Psoas muscle (tissue), 8 donors: ENCODE measurements at regions of chr12 and their contacts with region 1.

Region 1: GRCh38 chr12:2682296-2683251 is 112.2 kb upstream of the FKBP4 start:
- DNase-seq: no peak
- ATAC-seq: peak; percentile 50 to 78 (median 72)
- H3K4me3 ChIP-seq: no peak overlapping the region
- H3K27ac ChIP-seq: no peak overlapping the region
- H3K4me1 ChIP-seq: no peaks in the 10 kb centered on the region
- H3K27me3 ChIP-seq: no peaks in the 10 kb centered on the region
- CTCF ChIP-seq: peak; percentile 47

Region 2: DNA sequence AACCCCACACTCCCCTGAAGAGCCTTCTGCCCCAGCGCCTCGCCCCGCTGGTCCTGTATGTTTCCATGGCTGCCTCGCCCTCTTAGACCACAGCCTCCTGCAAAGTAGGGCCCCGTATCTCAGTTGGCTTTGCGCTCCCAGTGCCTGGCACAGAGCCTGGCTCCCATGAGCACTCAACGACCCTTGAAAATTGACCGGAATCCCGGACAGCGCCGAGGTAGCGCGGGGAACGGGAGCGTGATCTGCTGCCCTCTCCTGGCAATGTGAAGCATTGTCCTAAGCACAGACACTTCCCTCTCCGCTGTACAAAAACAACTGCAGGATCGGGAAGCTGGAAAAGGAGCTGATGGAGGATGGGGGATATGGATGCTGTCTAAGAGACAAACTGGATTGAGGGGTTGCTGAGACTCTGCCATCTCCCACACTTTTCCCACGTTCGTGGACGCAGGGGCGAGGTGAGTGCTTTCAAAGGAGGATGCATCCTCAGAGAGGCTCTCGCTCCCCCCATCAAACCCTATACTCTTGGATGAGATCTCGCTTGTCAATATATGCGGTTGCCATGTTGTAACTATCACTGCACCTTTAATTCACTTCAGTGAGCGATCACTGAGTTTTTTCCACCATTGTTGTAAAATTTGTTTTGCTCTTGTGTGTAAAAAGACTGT is 101.5 kb after region 1 on chr12:
- intact Hi-C with region 1: loop called in 1 of 2 experiments (anchors 5 kb)
- DNase-seq: peak; percentile 56 to 76
- ATAC-seq: peak; percentile 85 to 98 (median 92)
- H3K4me3 ChIP-seq: peak overlapping the region; percentile 63
- H3K27ac ChIP-seq: no peak overlapping the region
- H3K4me1 ChIP-seq: no peaks in the 10 kb centered on the region
- H3K27me3 ChIP-seq: no peaks in the 10 kb centered on the region
- CTCF ChIP-seq: peak; percentile 83